A549 (cell line): ENCODE measurements at regions of chr9 and their contacts with region 1.

Region 1: GRCh38 chr9:115013998-115014397 is 83.6 kb upstream of the TNFSF8 start:
- DNase-seq: peak; percentile 72 to 79
- ATAC-seq: peak; percentile 72 to 90
- H3K4me3 ChIP-seq: no peak overlapping the region
- H3K27ac ChIP-seq: no peak overlapping the region
- H3K4me1 ChIP-seq: 0 out of 3 replicates have a peak, but pooled peaks cover under 1% of the 10 kb centered on the region
- CTCF ChIP-seq: peak; percentile 93
- EP300 ChIP-seq: no peak
- POLR2A ChIP-seq: no peak
- RAD21 ChIP-seq: peak; percentile 98

Region 2: GRCh38 chr9:114674798-114675540 is 339.0 kb before region 1 on chr9:
- CTCF ChIA-PET with region 1: interaction called, 55 read pairs
- POLR2A ChIA-PET with region 1: no interaction called
- DNase-seq: no peak
- ATAC-seq: no peak
- H3K4me3 ChIP-seq: no peak overlapping the region
- H3K27ac ChIP-seq: peak overlapping the region; percentile 82 to 91; a peak in 4 of 6 replicates
- H3K4me1 ChIP-seq: peaks cover 51% of the 10 kb centered on the region
- CTCF ChIP-seq: no peak
- EP300 ChIP-seq: no peak
- POLR2A ChIP-seq: no peak
- RAD21 ChIP-seq: no peak

Region 3: GRCh38 chr9:114691046-114691955 is 322.7 kb before region 1 on chr9:
- CTCF ChIA-PET with region 1: interaction called, 10 read pairs
- POLR2A ChIA-PET with region 1: no interaction called
- DNase-seq: peak; percentile 69 to 78
- ATAC-seq: peak; percentile 93 to 97
- H3K4me3 ChIP-seq: peak overlapping the region; percentile 6; the same call in 1 of the 3 replicates
- H3K27ac ChIP-seq: peak overlapping the region; percentile 74 to 82
- H3K4me1 ChIP-seq: peaks cover 31% of the 10 kb centered on the region
- CTCF ChIP-seq: no peak
- EP300 ChIP-seq: 0 out of 5 replicates have a peak, but pooled peaks of 1 of the 2 experiments have one; percentile 55
- POLR2A ChIP-seq: no peak
- RAD21 ChIP-seq: peak; percentile 16 to 25; a peak in 2 of 5 replicates

Region 4: DNA sequence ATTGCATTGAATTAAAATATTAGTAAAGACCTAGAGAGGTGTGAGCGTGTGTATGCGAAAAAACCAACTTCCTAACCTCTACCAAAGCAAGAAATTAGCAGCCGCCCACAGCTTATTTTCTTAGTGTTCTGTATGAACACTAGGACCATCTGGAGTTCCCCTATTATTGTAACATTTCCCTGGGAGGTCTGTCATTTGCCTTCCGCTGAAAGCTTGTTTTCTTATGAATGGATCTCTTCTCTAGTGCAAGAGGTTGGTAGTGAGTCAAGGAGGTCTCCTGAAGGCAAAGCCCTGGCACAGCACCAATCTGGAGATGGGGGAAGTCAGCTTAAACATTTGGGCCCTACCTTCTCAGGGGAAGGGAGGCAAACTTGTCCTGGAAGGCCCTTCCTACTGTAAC is 94.4 kb before region 1 on chr9:
- CTCF ChIA-PET with region 1: interaction called, 127 read pairs
- POLR2A ChIA-PET with region 1: no interaction called
- DNase-seq: no peak
- ATAC-seq: no peak
- H3K4me3 ChIP-seq: no peak overlapping the region
- H3K27ac ChIP-seq: no peak overlapping the region
- H3K4me1 ChIP-seq: no peaks in the 10 kb centered on the region
- CTCF ChIP-seq: no peak
- EP300 ChIP-seq: no peak
- POLR2A ChIP-seq: no peak
- RAD21 ChIP-seq: no peak

Region 5: GRCh38 chr9:115024969-115025427 is 11.0 kb after region 1 on chr9:
- CTCF ChIA-PET with region 1: interaction called, 20 read pairs
- POLR2A ChIA-PET with region 1: no interaction called
- DNase-seq: no peak
- ATAC-seq: no peak
- H3K4me3 ChIP-seq: no peak overlapping the region
- H3K27ac ChIP-seq: no peak overlapping the region
- H3K4me1 ChIP-seq: no peaks in the 10 kb centered on the region
- CTCF ChIP-seq: no peak
- EP300 ChIP-seq: no peak
- POLR2A ChIP-seq: no peak
- RAD21 ChIP-seq: no peak

Region 6: DNA sequence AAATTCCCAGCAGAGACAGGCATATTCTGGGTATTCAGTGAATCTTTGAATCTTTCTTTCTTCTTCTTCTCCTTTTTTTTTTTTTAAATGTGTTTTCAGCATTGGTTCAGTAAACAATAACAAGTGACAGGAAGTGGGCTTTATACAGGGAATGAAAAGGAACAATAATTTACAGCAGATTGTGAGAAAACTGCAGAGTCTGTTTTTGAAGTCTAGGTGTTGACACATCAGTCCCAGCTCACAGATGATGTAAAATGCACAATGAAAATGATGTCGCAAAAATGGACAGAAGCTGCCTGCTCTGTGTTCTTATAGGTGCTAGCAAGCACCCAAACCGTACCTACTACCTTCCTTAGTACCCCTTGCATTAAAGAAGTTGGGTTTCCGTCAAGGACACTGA is 65.2 kb after region 1 on chr9:
- CTCF ChIA-PET with region 1: no interaction called
- POLR2A ChIA-PET with region 1: no interaction called
- DNase-seq: no peak
- ATAC-seq: no peak
- H3K4me3 ChIP-seq: no peak overlapping the region
- H3K27ac ChIP-seq: no peak overlapping the region
- H3K4me1 ChIP-seq: no peaks in the 10 kb centered on the region
- CTCF ChIP-seq: no peak
- EP300 ChIP-seq: no peak
- POLR2A ChIP-seq: no peak
- RAD21 ChIP-seq: no peak

Region 7: GRCh38 chr9:115328228-115328627 is 314.2 kb after region 1 on chr9:
- CTCF ChIA-PET with region 1: no interaction called
- POLR2A ChIA-PET with region 1: no interaction called
- DNase-seq: no peak
- ATAC-seq: no peak
- H3K4me3 ChIP-seq: no peak overlapping the region
- H3K27ac ChIP-seq: no peak overlapping the region
- H3K4me1 ChIP-seq: no peaks in the 10 kb centered on the region
- CTCF ChIP-seq: no peak
- EP300 ChIP-seq: no peak
- POLR2A ChIP-seq: no peak
- RAD21 ChIP-seq: no peak

Region 8: DNA sequence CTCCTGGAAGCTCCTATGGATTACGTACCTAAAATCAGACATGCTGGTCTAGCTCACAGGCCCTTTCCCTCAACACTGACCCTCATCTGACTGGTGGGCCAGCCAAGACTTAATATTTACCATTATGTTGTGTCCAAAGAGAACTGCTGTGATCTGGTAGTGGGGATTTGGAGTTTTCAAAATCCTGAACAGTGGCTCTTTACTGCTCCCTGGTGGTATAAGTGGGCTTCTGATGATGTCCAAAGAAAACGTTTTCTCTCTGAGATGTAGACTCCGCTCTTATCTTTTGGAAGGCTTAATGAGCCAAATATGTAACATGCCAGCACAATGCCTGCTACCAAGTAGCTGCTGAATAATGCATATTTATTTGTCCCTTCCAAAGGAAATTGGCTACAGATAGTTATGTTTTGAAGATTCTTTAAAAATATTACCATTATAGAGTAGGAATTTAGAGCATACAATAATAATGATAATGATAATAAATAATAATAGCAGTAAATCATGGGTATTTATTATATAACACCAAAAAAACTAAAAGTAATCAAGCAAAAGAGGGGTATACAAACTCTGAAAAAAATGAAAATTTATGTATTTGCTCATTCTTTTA is 510.6 kb after region 1 on chr9:
- CTCF ChIA-PET with region 1: interaction called, 32 read pairs
- POLR2A ChIA-PET with region 1: no interaction called
- DNase-seq: peak; percentile 38 to 55
- ATAC-seq: peak in 1 of 2 experiments; percentile 80; a peak in 4 of 6 replicates
- H3K4me3 ChIP-seq: no peak overlapping the region
- H3K27ac ChIP-seq: no peak overlapping the region
- H3K4me1 ChIP-seq: no peaks in the 10 kb centered on the region
- CTCF ChIP-seq: peak; percentile 87
- EP300 ChIP-seq: no peak
- POLR2A ChIP-seq: no peak
- RAD21 ChIP-seq: peak; percentile 94 to 95